ENCODE measurements at regions of chr7 and their contacts with region 1.

Region 1: DNA sequence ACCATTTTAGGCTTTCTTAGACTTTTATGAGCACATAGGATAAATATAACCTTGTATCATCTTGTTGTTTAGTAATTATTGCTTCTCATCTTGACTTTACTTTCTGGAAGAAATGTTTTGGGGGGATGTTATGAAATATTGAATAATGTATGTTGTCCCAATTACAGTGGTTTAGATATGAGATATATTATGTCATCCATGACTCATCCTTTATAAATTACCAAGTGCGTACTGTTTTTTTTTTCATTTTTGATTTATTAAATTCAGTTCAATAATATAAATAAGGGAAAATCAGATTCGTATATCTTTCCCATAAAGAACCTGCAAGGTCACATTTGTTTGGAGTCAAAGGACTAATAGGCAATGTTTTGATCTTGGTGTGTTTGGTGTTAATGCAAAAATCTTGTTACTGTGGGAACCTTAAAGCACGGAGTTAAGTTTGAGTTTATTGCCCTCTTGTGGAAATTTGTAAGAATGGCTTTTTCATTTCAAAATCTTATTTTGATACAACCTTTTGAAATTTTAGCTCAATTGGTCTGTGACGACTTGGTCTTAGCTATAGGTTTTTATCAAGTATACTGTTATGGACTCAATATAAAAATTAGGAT is 108.6 kb downstream of the SRI start:
- DNase-seq: peak; percentile 41
- ATAC-seq: peak; percentile 46
- H3K4me3 ChIP-seq: no peak overlapping the region
- H3K27ac ChIP-seq: no peak overlapping the region
- H3K4me1 ChIP-seq: no peaks in the 10 kb centered on the region
- H3K27me3 ChIP-seq: no peaks in the 10 kb centered on the region
- CTCF ChIP-seq: peak; percentile 58
- POLR2A ChIP-seq: no peak
- RAD21 ChIP-seq: peak; percentile 56

Region 2: DNA sequence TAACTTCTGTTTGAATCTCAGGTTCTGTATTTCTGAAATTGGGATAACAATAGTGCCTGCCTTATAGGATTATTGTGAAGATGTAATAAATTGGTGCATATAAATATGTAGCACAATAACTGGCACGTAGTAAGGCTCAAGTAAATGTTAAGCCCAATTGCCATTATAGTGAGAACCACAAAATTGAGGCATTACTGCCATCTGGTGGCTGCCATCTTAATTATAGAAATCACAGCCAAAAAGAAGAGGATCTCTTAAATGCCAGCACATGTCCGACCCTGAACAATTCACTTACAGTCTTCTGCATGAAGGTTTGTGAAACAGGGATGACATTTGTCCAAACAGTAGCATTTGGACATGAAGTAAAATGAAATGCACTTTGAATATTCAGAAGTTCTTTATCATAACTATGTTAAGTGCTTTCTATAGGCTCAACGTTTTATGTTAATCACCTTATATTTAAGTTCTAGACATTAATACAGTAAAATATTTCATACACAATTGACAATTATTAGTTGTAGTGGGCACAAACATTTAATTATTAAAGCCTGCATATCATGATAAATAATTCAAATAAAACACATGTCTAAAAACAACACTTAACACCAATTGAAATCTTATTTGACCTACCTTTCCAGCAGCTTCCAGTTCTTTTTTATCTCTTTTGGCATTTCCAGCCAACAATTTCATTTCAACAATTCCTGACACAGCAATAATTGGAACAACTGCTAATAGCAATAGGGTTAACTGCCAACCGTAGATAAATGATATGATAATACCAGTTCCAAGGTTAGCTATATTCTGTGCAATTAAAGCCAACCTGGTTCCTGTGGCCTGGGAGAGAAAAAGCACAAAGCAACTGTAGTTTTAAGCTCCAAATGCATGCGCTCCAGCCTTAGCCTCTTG is 694.3 kb before region 1 on chr7:
- CTCF ChIA-PET with region 1: no interaction called
- POLR2A ChIA-PET with region 1: no interaction called
- dilution Hi-C with region 1: no loop called
- in situ Hi-C with region 1: no loop called
- intact Hi-C with region 1: loop called (anchors 5 kb)
- DNase-seq: peak; percentile 69
- ATAC-seq: peak; percentile 22; the same call in 1 of the 2 replicates
- H3K4me3 ChIP-seq: no peak overlapping the region
- H3K27ac ChIP-seq: no peak overlapping the region
- H3K4me1 ChIP-seq: peaks cover 12% of the 10 kb centered on the region
- H3K27me3 ChIP-seq: peaks cover 2% of the 10 kb centered on the region; the same call in 1 of the 2 replicates
- CTCF ChIP-seq: peak; percentile 85
- POLR2A ChIP-seq: no peak
- RAD21 ChIP-seq: peak; percentile 89

Region 3: DNA sequence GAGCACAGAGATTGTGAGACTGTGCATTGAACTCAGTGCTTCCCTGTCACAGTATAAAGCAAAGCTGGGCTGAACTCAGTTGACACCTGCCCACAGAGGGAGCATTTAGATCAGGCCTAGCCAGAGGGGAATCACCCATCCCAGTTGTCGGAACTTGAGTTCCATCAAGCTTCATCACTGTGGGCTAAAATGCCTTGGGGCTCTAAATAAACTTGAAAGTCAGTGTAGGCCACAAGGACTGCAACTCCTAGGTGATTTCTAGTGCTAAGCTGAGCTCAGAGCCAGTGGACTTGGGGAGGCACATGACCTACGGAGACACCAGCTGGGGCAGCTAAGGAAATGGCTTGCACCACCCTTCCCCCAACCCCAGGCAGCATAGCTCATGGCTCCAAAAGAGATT is 628.1 kb before region 1 on chr7:
- CTCF ChIA-PET with region 1: no interaction called
- POLR2A ChIA-PET with region 1: interaction called, 10 read pairs
- dilution Hi-C with region 1: no loop called
- in situ Hi-C with region 1: no loop called
- intact Hi-C with region 1: no loop called
- DNase-seq: no peak
- ATAC-seq: no peak
- H3K4me3 ChIP-seq: no peak overlapping the region
- H3K27ac ChIP-seq: no peak overlapping the region
- H3K4me1 ChIP-seq: no peaks in the 10 kb centered on the region
- H3K27me3 ChIP-seq: no peaks in the 10 kb centered on the region
- CTCF ChIP-seq: no peak
- POLR2A ChIP-seq: no peak
- RAD21 ChIP-seq: no peak

Region 4: DNA sequence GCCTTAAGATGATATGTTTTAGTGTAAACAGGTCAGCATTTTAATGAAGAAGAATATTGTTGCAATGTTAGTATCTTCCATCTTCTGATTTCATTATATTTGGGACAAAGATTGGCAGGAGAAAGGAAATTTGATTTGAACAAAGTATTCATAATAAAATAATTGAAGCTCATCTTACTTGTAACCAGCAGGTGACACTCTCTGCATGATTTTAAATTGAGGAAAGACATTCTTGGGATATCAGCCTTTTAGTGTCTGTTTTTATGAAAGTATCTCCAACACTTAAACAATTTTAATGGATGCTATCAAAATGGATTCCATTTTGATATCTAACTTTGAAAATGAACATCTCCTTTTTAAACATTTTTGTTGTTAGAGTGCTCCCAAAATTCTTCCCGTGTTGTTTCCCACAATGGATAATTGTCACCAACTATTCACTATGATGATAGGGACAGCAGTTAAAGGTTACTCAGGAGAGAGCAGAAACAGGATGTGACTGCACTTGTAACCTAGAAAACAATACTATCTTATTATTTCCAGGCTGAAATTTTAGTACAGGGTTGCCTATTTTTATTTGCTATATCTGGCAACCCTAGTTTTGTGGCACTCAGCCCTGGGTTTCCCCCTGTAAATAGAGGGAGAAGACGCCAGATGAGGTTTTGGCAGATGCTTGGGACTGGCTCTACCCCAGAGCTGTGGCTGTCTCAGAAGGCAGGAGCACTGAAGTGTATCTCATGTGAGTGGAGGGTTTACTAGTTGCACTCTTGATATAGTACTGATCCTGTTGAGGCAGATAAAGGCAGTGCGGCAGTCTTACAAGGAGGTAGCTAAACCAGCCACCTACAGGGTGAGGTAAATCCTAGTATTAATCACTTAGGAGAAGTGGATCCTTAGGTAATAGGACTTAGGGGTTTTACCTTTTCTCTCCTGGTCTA is 604.7 kb before region 1 on chr7:
- CTCF ChIA-PET with region 1: no interaction called
- POLR2A ChIA-PET with region 1: no interaction called
- dilution Hi-C with region 1: no loop called
- in situ Hi-C with region 1: loop called (anchors 10 kb)
- intact Hi-C with region 1: loop called (anchors 1 kb)
- DNase-seq: peak; percentile 43
- ATAC-seq: peak; percentile 57; the same call in 1 of the 2 replicates
- H3K4me3 ChIP-seq: no peak overlapping the region
- H3K27ac ChIP-seq: no peak overlapping the region
- H3K4me1 ChIP-seq: peaks cover 3% of the 10 kb centered on the region; the same call in 1 of the 2 replicates
- H3K27me3 ChIP-seq: peaks cover 2% of the 10 kb centered on the region; the same call in 1 of the 2 replicates
- CTCF ChIP-seq: peak; percentile 70
- POLR2A ChIP-seq: no peak
- RAD21 ChIP-seq: peak; percentile 68

Region 5: DNA sequence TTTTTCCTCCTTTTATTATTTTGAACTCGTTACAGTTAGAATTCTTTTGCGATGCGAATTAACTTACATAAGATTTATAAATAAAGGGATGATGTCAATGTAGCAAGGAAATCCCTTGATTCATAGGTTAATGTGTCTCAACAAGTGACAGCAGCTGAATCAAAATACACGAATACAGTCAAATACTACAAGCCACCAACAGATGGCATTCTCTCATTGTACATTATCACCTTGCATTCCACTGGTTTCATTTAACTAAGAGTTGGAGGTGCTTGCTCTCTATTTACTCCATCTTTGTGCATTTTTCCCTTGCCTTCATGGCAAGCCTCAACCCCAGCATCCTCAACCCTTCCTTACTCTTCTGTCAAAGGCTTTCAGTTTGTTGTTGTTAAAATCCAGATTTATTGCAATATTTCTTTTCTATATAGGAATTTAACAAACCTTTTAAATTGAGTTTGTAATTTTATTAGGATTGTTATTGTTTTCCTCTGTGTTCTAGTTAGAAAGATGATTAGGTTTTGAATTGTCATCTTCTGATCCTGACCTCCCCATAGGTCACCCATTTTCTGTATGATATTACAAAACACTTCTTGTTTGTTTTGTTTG is 313.3 kb before region 1 on chr7:
- CTCF ChIA-PET with region 1: no interaction called
- POLR2A ChIA-PET with region 1: no interaction called
- dilution Hi-C with region 1: no loop called
- in situ Hi-C with region 1: loop called (anchors 25 kb)
- intact Hi-C with region 1: loop called (anchors 1 kb)
- DNase-seq: peak; percentile 47
- ATAC-seq: peak; percentile 79
- H3K4me3 ChIP-seq: no peak overlapping the region
- H3K27ac ChIP-seq: no peak overlapping the region
- H3K4me1 ChIP-seq: no peaks in the 10 kb centered on the region
- H3K27me3 ChIP-seq: no peaks in the 10 kb centered on the region
- CTCF ChIP-seq: peak; percentile 67
- POLR2A ChIP-seq: no peak
- RAD21 ChIP-seq: peak; percentile 70

Region 6: DNA sequence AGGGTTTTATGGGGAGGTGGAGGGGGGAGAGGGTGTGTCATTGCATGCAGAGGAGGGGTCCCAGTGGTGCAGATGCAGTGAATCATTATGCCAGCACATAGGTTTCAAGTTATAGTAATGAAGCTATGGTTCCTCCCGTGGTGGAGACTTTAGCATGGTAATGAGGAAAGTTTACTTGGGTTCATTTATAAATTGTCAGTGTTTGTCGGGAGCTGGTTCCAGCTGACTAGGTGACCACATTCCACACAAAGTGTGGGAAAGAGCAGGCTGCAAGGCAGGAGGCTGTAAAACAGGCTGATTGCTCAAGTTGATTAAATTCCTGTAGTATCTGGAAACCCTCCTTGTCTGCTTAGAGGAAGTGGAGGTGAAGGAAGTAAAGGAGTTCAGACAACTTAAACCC is 29.7 kb after region 1 on chr7:
- CTCF ChIA-PET with region 1: no interaction called
- POLR2A ChIA-PET with region 1: no interaction called
- dilution Hi-C with region 1: no loop called
- in situ Hi-C with region 1: no loop called
- intact Hi-C with region 1: loop called (anchors 2 kb)
- DNase-seq: no peak
- ATAC-seq: no peak
- H3K4me3 ChIP-seq: no peak overlapping the region
- H3K27ac ChIP-seq: no peak overlapping the region
- H3K4me1 ChIP-seq: no peaks in the 10 kb centered on the region
- H3K27me3 ChIP-seq: no peaks in the 10 kb centered on the region
- CTCF ChIP-seq: no peak
- POLR2A ChIP-seq: no peak
- RAD21 ChIP-seq: no peak

Region 7: GRCh38 chr7:88243345-88243909 is 132.2 kb after region 1 on chr7:
- CTCF ChIA-PET with region 1: no interaction called
- POLR2A ChIA-PET with region 1: no interaction called
- dilution Hi-C with region 1: no loop called
- in situ Hi-C with region 1: no loop called
- intact Hi-C with region 1: no loop called
- DNase-seq: peak; percentile 44
- ATAC-seq: peak; percentile 77
- H3K4me3 ChIP-seq: no peak overlapping the region
- H3K27ac ChIP-seq: no peak overlapping the region
- H3K4me1 ChIP-seq: no peaks in the 10 kb centered on the region
- H3K27me3 ChIP-seq: no peaks in the 10 kb centered on the region
- CTCF ChIP-seq: peak; percentile 71
- POLR2A ChIP-seq: no peak
- RAD21 ChIP-seq: peak; percentile 67

Region 8: DNA sequence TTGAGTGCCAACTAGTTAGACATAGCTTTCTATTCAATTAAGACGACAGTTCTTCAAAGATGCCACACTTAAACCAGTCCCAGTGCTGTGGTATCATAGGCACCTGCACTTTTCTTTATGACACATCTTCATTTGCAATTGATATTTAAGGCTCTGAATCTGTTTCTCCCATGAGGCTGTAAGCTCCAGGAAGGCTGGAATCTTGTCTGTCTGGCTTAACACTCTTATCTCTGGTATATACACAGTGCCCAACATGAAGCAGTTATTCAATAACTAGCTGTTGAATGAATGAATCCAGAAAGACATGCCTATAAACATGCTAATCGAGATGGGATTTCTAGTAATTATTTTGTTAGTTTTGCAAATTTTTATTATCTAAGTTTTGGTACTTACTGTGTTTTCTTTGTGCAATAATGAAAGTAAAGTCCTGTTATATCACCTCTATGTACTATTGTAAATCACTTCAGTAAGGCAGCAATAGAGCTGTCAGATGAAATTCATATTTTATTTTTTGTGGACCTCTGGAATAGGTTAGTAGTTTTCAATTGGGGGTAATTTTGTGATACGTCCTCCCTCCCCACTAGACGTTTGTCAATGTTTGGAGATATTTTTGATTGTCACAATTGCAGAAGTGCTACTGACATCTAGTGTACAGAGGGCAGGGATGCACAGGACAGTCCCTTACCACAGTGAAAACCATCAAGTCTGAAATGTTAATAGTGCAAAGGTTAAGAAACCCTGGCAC is 246.7 kb after region 1 on chr7:
- CTCF ChIA-PET with region 1: no interaction called
- POLR2A ChIA-PET with region 1: no interaction called
- dilution Hi-C with region 1: no loop called
- in situ Hi-C with region 1: no loop called
- intact Hi-C with region 1: no loop called
- DNase-seq: no peak
- ATAC-seq: no peak
- H3K4me3 ChIP-seq: no peak overlapping the region
- H3K27ac ChIP-seq: no peak overlapping the region
- H3K4me1 ChIP-seq: no peaks in the 10 kb centered on the region
- H3K27me3 ChIP-seq: no peaks in the 10 kb centered on the region
- CTCF ChIP-seq: no peak
- POLR2A ChIP-seq: no peak
- RAD21 ChIP-seq: no peak

Measured in IMR-90 (cell line).